AG04450 (cell line): ENCODE measurements at regions of chr1 and their contacts with region 1.

Region 1: DNA sequence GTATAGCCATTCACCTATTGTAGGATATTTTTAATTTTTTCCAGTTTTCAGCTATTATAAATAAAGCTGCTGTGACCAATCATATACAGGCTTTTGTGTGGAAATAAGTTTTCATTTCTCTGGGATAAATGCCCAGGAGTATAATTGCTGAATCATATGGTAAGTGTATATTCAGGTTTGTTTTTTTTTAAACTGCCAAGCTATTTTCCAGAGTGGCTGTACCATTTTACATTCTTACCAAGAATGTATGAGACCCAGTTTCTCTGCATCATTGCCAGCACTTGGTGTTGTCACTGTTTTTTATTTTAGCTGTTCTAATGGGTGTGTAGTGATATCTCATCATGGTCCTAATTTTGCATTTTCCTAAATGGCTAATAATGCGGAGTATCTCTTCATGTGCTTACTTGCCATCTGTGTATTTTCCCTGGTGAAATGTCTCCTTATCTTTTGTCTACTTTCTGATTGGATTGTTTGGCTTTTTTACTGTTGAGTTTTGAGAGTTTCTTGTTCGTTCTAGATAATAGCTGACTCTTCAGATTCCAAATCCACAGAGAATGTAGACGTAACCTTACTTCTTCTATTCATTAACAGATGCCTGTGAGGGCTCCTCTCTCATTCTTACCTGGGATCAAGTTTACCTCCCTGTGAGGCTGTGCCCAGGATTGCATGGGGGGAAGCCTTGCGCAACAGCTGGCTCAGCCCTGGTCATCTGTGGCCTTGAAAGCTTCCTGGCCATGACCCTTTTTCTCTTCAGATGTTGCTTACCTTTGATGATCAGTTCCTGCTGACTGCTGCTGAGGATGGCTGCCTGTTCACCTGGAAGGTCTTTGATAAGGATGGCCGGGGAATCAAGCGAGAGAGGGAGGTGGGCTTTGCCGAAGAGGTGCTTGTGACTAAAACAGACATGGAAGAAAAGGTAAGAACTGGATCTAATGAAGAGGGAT is 42.6 kb downstream of the CFAP57 start:
- DNase-seq: peak; percentile 8
- H3K4me3 ChIP-seq: no peak overlapping the region
- H3K27ac ChIP-seq: no peak overlapping the region
- H3K27me3 ChIP-seq: no peaks in the 10 kb centered on the region
- CTCF ChIP-seq: no peak

Region 2: DNA sequence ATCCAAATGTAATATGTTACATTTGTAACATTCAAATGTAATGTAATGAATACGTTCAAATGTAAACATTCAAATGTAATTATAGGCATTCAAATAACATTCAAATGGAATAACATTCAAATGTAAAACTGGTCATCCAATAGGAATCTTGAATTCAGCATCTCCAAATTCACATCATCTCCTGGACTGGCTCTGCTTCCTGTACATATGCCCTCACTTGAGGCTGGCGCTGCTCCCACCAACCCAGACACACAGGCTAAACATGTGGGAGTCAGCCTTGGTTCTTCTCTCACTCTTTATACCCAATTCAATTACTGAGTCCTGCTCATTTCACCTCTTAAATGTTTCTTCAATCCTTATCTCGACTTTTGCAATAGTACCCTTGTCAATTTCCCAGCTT is 49.6 kb before region 1 on chr1:
- CTCF ChIA-PET with region 1: no interaction called
- POLR2A ChIA-PET with region 1: interaction called, 11 read pairs
- DNase-seq: no peak
- H3K4me3 ChIP-seq: no peak overlapping the region
- H3K27ac ChIP-seq: no peak overlapping the region
- H3K27me3 ChIP-seq: no peaks in the 10 kb centered on the region
- CTCF ChIP-seq: no peak